Activated B cell treated with CpG ODN at 0.5 μM for 24 hours (primary cell): ENCODE measurements at regions of chr12 and their contacts with region 1.

Region 1: GRCh38 chr12:79006306-79006705 is 141.7 kb downstream of the SYT1 start:
- DNase-seq: no peak
- ATAC-seq: no peak
- H3K4me3 Mint-ChIP-seq: no peak overlapping the region
- H3K27ac Mint-ChIP-seq: no peak overlapping the region
- H3K4me1 Mint-ChIP-seq: no peaks in the 10 kb centered on the region
- H3K27me3 Mint-ChIP-seq: no peaks in the 10 kb centered on the region
- CTCF ChIP-seq: no peak

Region 2: DNA sequence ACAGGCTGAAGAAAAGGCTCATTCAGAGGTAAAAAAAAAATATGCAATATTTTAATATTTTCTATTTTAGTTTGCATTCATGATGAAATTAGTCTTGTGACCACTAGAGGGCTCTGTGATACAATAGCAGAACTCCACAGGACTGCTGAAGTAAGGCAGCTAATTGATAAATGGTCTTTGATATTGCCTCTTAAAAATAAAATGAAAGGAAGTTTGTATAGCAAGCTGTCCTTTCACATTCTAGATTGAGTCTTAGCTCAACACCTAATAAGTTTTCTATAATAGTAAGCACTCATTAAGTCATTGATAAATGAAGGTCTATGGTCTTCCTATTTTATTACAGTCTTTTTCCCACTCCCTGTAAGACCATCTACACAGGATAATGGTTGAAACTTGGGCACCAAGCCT is 859.9 kb before region 1 on chr12:
- CTCF ChIA-PET with region 1: interaction called, 3 read pairs
- POLR2A ChIA-PET with region 1: no interaction called
- intact Hi-C with region 1: loop called (anchors 2 kb)
- DNase-seq: no peak
- ATAC-seq: peak; percentile 47
- H3K4me3 Mint-ChIP-seq: no peak overlapping the region
- H3K27ac Mint-ChIP-seq: no peak overlapping the region
- H3K4me1 Mint-ChIP-seq: no peaks in the 10 kb centered on the region
- H3K27me3 Mint-ChIP-seq: no peaks in the 10 kb centered on the region
- CTCF ChIP-seq: peak; percentile 69

Region 3: GRCh38 chr12:78181544-78182162 is 824.7 kb before region 1 on chr12:
- CTCF ChIA-PET with region 1: no interaction called
- POLR2A ChIA-PET with region 1: no interaction called
- intact Hi-C with region 1: loop called (anchors 2 kb)
- DNase-seq: no peak
- ATAC-seq: no peak
- H3K4me3 Mint-ChIP-seq: no peak overlapping the region
- H3K27ac Mint-ChIP-seq: no peak overlapping the region
- H3K4me1 Mint-ChIP-seq: no peaks in the 10 kb centered on the region
- H3K27me3 Mint-ChIP-seq: no peaks in the 10 kb centered on the region
- CTCF ChIP-seq: no peak

Region 4: DNA sequence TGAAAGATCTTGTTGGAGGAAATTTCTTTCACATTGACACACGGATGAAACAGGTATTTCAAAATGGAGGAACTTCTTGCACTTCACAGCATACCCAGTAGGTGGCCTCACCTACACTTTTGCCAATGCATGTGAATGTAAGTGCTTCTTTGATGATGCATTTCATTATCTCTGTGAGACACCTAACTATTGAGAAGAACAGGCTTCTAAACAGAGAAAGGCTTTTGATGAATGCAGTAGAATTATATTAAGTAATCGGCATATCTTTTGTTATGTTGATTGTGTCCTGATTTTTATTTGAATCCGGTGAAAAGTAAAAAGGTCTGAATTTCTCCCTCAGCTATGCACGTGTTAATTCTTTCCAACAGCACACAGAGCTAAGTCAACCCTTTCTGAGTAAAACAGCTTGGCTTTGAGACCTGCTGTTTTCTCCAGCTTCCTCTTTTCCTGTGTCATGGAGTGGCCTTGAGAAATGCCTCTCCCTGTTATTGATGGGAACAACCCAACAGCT is 776.7 kb before region 1 on chr12:
- CTCF ChIA-PET with region 1: interaction called, 3 read pairs
- POLR2A ChIA-PET with region 1: no interaction called
- intact Hi-C with region 1: loop called (anchors 1 kb)
- DNase-seq: no peak
- ATAC-seq: peak; percentile 45
- H3K4me3 Mint-ChIP-seq: no peak overlapping the region
- H3K27ac Mint-ChIP-seq: no peak overlapping the region
- H3K4me1 Mint-ChIP-seq: no peaks in the 10 kb centered on the region
- H3K27me3 Mint-ChIP-seq: no peaks in the 10 kb centered on the region
- CTCF ChIP-seq: no peak

Region 5: GRCh38 chr12:78470354-78471195 is 535.7 kb before region 1 on chr12:
- CTCF ChIA-PET with region 1: interaction called, 3 read pairs
- POLR2A ChIA-PET with region 1: no interaction called
- intact Hi-C with region 1: loop called (anchors 1 kb)
- DNase-seq: no peak
- ATAC-seq: no peak
- H3K4me3 Mint-ChIP-seq: no peak overlapping the region
- H3K27ac Mint-ChIP-seq: no peak overlapping the region
- H3K4me1 Mint-ChIP-seq: no peaks in the 10 kb centered on the region
- H3K27me3 Mint-ChIP-seq: no peaks in the 10 kb centered on the region
- CTCF ChIP-seq: no peak

Region 6: GRCh38 chr12:78562368-78563205 is 443.7 kb before region 1 on chr12:
- CTCF ChIA-PET with region 1: interaction called, 5 read pairs
- POLR2A ChIA-PET with region 1: no interaction called
- intact Hi-C with region 1: loop called (anchors 2 kb)
- DNase-seq: no peak
- ATAC-seq: no peak
- H3K4me3 Mint-ChIP-seq: no peak overlapping the region
- H3K27ac Mint-ChIP-seq: no peak overlapping the region
- H3K4me1 Mint-ChIP-seq: no peaks in the 10 kb centered on the region
- H3K27me3 Mint-ChIP-seq: no peaks in the 10 kb centered on the region
- CTCF ChIP-seq: no peak